ENCODE measurements at regions of chr10 and their contacts with region 1.

Region 1: GRCh38 chr10:107317594-107317993 is 153.1 kb upstream of the SORCS1 start:
- DNase-seq: no peak
- ATAC-seq: no peak
- H3K4me3 ChIP-seq: no peak overlapping the region
- H3K4me3 Mint-ChIP-seq: no peak overlapping the region
- H3K27ac ChIP-seq: no peak overlapping the region
- H3K27ac Mint-ChIP-seq: no peak overlapping the region
- H3K4me1 ChIP-seq: no peaks in the 10 kb centered on the region
- H3K4me1 Mint-ChIP-seq: no peaks in the 10 kb centered on the region
- H3K27me3 ChIP-seq: no peaks in the 10 kb centered on the region
- H3K27me3 Mint-ChIP-seq: no peaks in the 10 kb centered on the region

Region 2: GRCh38 chr10:105989995-105990394 is 1327.6 kb before region 1 on chr10:
- CTCF ChIA-PET with region 1: no interaction called
- POLR2A ChIA-PET with region 1: interaction called in 1 of 2 experiments, 15 read pairs
- DNase-seq: no peak
- ATAC-seq: no peak
- H3K4me3 ChIP-seq: no peak overlapping the region
- H3K4me3 Mint-ChIP-seq: no peak overlapping the region
- H3K27ac ChIP-seq: no peak overlapping the region
- H3K27ac Mint-ChIP-seq: no peak overlapping the region
- H3K4me1 ChIP-seq: no peaks in the 10 kb centered on the region
- H3K4me1 Mint-ChIP-seq: no peaks in the 10 kb centered on the region
- H3K27me3 ChIP-seq: no peaks in the 10 kb centered on the region
- H3K27me3 Mint-ChIP-seq: no peaks in the 10 kb centered on the region

Measured in T-cell (primary cell).